ENCODE measurements at regions of chr9 and their contacts with region 1.

Region 1: GRCh38 chr9:38697776-38698300 is 22.1 kb downstream of the FAM240B start:
- DNase-seq: no peak
- H3K4me3 Mint-ChIP-seq: no peak overlapping the region
- H3K27ac Mint-ChIP-seq: no peak overlapping the region
- H3K4me1 Mint-ChIP-seq: no peaks in the 10 kb centered on the region
- H3K27me3 Mint-ChIP-seq: peaks cover 5% of the 10 kb centered on the region

Region 2: GRCh38 chr9:38651400-38652042 is 46.3 kb before region 1 on chr9:
- CTCF ChIA-PET with region 1: no interaction called
- POLR2A ChIA-PET with region 1: no interaction called
- intact Hi-C with region 1: no loop called
- DNase-seq: no peak
- H3K4me3 Mint-ChIP-seq: no peak overlapping the region
- H3K27ac Mint-ChIP-seq: no peak overlapping the region
- H3K4me1 Mint-ChIP-seq: no peaks in the 10 kb centered on the region
- H3K27me3 Mint-ChIP-seq: peaks cover 13% of the 10 kb centered on the region

Region 3: GRCh38 chr9:38707885-38708637 is 10.2 kb after region 1 on chr9:
- CTCF ChIA-PET with region 1: no interaction called
- POLR2A ChIA-PET with region 1: no interaction called
- intact Hi-C with region 1: loop called (anchors 1 kb)
- DNase-seq: no peak
- H3K4me3 Mint-ChIP-seq: no peak overlapping the region
- H3K27ac Mint-ChIP-seq: no peak overlapping the region
- H3K4me1 Mint-ChIP-seq: no peaks in the 10 kb centered on the region
- H3K27me3 Mint-ChIP-seq: peaks cover 10% of the 10 kb centered on the region